CD8-positive, alpha-beta T cell (primary cell): ENCODE measurements at regions of chr14 and their contacts with region 1.

Region 1: DNA sequence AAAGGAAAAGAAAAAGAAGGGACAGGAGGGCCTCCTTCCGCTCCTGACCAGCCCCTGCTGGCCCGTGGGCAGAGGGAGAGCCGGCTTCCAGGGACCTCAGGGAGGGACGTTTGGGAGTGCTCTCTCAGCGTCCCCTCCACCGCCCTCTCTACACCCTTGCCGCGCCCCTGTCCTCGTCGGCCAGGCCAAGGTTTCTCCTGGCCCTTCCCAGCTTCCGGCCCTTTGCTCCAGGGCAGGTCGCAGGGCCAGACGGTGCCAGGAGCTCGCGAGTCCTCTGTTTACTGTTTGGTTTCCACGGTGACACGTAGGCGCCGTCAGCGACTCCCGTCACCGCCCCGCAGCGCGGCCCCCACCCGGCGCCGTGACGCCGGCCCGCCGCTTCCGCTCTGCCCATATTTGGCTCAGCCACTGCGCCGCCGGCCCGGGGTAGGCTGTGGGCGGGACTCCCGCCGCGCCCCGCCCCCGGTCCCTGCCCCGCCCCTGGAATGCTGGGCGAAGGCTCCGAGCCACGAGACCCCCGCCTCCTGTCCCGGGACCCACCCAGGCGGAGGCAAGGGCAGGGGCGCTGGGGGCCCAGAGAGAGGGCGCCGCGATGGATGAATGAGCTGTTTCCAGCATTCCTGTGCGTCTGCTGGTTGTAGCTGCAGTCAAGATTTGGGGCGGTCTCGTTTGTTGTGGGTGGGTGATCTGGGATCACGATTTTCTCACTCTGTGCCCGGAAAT is 15.5 kb downstream of the FOS start:
- DNase-seq: peak; percentile 90 to 99 (median 94)
- ATAC-seq: peak; percentile 87
- H3K4me3 ChIP-seq: peak overlapping the region; percentile 31 to 62
- H3K4me3 Mint-ChIP-seq: peak overlapping the region; percentile 88
- H3K27ac ChIP-seq: peak overlapping the region; percentile 95 to 99
- H3K27ac Mint-ChIP-seq: peak overlapping the region; percentile 93
- H3K4me1 ChIP-seq: peaks cover 23% of the 10 kb centered on the region
- H3K4me1 Mint-ChIP-seq: peaks cover 23% of the 10 kb centered on the region
- H3K27me3 ChIP-seq: peaks cover 0 to 2% of the 10 kb centered on the region in 2 experiments
- H3K27me3 Mint-ChIP-seq: no peaks in the 10 kb centered on the region
- CTCF ChIP-seq: no peak

Region 2: GRCh38 chr14:75053396-75054291 is 240.4 kb before region 1 on chr14:
- CTCF ChIA-PET with region 1: no interaction called
- POLR2A ChIA-PET with region 1: no interaction called
- intact Hi-C with region 1: no loop called
- DNase-seq: no peak
- ATAC-seq: no peak
- H3K4me3 ChIP-seq: no peak overlapping the region
- H3K4me3 Mint-ChIP-seq: no peak overlapping the region
- H3K27ac ChIP-seq: no peak overlapping the region
- H3K27ac Mint-ChIP-seq: no peak overlapping the region
- H3K4me1 ChIP-seq: peaks cover 15% of the 10 kb centered on the region
- H3K4me1 Mint-ChIP-seq: peaks cover 26% of the 10 kb centered on the region
- H3K27me3 ChIP-seq: no peaks in the 10 kb centered on the region
- H3K27me3 Mint-ChIP-seq: no peaks in the 10 kb centered on the region
- CTCF ChIP-seq: no peak

Region 3: DNA sequence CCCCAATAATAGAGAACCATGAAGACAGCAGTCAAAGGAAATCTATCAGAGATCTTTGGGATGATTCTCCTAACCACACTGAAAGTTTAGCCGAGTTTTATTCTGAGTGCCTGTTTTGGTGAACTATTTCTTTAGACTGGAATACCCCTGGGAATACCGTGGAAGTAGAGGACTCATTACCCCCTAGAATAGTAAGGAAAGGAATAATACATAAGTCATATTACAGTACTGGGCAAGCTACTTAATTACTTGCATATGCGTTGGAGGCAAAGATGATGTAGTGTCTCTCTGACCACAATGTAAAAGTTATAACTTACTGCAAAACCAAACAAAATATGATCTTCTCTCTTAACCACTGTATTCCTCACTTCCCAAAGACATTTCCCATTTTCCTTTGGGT is 199.2 kb before region 1 on chr14:
- CTCF ChIA-PET with region 1: no interaction called
- POLR2A ChIA-PET with region 1: no interaction called
- intact Hi-C with region 1: no loop called
- DNase-seq: no peak
- ATAC-seq: no peak
- H3K4me3 ChIP-seq: no peak overlapping the region
- H3K4me3 Mint-ChIP-seq: no peak overlapping the region
- H3K27ac ChIP-seq: no peak overlapping the region
- H3K27ac Mint-ChIP-seq: no peak overlapping the region
- H3K4me1 ChIP-seq: no peaks in the 10 kb centered on the region
- H3K4me1 Mint-ChIP-seq: no peaks in the 10 kb centered on the region
- H3K27me3 ChIP-seq: no peaks in the 10 kb centered on the region
- H3K27me3 Mint-ChIP-seq: no peaks in the 10 kb centered on the region
- CTCF ChIP-seq: no peak

Region 4: DNA sequence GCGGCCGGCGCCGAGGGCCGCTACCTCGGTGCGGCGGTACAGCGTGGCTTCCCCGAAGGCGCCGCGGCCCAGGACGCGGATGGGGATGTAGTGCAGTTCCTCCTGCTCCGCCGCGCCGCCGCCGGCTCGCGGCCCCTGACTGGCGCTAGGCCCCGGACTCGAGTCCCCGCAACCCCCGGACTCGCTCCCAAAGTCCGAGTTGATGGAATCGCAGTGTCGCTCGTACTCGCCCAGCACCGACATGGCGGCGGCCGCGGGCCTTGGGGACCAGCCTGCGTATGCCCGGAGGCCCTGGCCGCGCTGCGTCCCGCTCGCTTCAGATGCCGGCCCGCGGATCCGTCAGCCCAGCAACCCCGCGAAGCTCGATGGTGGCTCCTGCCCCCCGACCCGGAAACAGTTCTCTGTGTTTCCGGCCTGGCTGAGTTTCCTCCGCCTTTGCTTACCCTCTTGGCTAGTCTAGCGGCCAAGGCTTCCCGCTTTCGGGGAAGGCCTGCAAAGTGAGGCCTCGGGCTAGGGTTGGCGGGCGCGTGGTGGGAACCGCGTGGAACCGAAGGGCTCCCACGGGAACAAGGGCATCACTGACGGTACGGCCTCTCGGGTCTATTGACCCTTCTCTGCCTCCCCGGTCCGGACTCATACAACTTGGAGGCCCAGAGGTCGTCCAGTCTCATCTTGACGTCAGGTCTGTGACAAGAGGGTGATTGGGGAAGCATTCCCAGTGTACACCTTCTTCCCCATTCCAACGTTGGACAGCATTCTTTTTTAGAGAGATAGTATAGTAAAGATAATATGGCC is 167.2 kb before region 1 on chr14 and contains the start of gene NEK9:
- CTCF ChIA-PET with region 1: interaction called, 473 read pairs
- POLR2A ChIA-PET with region 1: interaction called, 8 read pairs
- intact Hi-C with region 1: loop called in 1 of 2 experiments (anchors 1 kb)
- DNase-seq: peak; percentile 77 to 93 (median 89)
- ATAC-seq: peak; percentile 82
- H3K4me3 ChIP-seq: peak within 1 kb of the TSS; percentile 87 to 95
- H3K4me3 Mint-ChIP-seq: peak within 1 kb of the TSS; percentile 95
- H3K27ac ChIP-seq: peak within 1 kb of the TSS; percentile 87 to 92
- H3K27ac Mint-ChIP-seq: peak within 1 kb of the TSS; percentile 98
- H3K4me1 ChIP-seq: peaks cover 23% of the 10 kb centered on the region
- H3K4me1 Mint-ChIP-seq: peaks cover 46% of the 10 kb centered on the region
- H3K27me3 ChIP-seq: no peaks in the 10 kb centered on the region
- H3K27me3 Mint-ChIP-seq: no peaks in the 10 kb centered on the region
- CTCF ChIP-seq: no peak
- total RNA-seq, gene NEK9: 40.7 to 42.9 TPM

Region 5: DNA sequence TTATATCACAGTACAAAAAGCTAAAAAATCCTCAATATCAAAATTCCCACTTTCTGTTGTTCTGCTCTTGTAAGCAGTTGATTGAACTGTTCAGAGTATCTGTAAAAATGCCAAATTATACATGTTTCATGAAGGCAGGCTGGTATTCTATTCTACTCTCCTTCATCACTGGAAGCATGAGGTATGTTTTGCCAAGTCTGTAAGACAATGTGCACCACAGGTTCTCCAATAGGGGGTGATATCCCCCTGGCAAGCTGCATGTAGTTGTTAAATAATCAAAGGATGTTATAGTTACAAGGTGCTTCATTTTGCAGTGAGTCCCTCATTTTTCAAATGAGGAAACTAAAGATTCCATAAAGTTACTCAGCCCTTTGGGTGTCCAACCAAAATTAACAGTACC is 152.1 kb before region 1 on chr14:
- CTCF ChIA-PET with region 1: interaction called, 473 read pairs
- POLR2A ChIA-PET with region 1: interaction called, 4 read pairs
- intact Hi-C with region 1: loop called in 1 of 2 experiments (anchors 2 kb)
- DNase-seq: peak in 4 of 9 experiments; percentile 35 to 71 (median 59)
- ATAC-seq: peak; percentile 70
- H3K4me3 ChIP-seq: no peak overlapping the region
- H3K4me3 Mint-ChIP-seq: no peak overlapping the region
- H3K27ac ChIP-seq: no peak overlapping the region
- H3K27ac Mint-ChIP-seq: peak overlapping the region; percentile 55
- H3K4me1 ChIP-seq: peaks cover 50% of the 10 kb centered on the region
- H3K4me1 Mint-ChIP-seq: peaks cover 70% of the 10 kb centered on the region
- H3K27me3 ChIP-seq: no peaks in the 10 kb centered on the region
- H3K27me3 Mint-ChIP-seq: no peaks in the 10 kb centered on the region
- CTCF ChIP-seq: peak; percentile 52

Region 6: GRCh38 chr14:75242546-75243273 is 51.4 kb before region 1 on chr14:
- CTCF ChIA-PET with region 1: interaction called, 20 read pairs
- POLR2A ChIA-PET with region 1: interaction called, 9 read pairs
- intact Hi-C with region 1: no loop called
- DNase-seq: no peak
- ATAC-seq: no peak
- H3K4me3 ChIP-seq: no peak overlapping the region
- H3K4me3 Mint-ChIP-seq: no peak overlapping the region
- H3K27ac ChIP-seq: no peak overlapping the region
- H3K27ac Mint-ChIP-seq: no peak overlapping the region
- H3K4me1 ChIP-seq: peaks cover 18% of the 10 kb centered on the region
- H3K4me1 Mint-ChIP-seq: peaks cover 19% of the 10 kb centered on the region
- H3K27me3 ChIP-seq: no peaks in the 10 kb centered on the region
- H3K27me3 Mint-ChIP-seq: no peaks in the 10 kb centered on the region
- CTCF ChIP-seq: no peak

Region 7: GRCh38 chr14:75258615-75259466 is 35.2 kb before region 1 on chr14:
- CTCF ChIA-PET with region 1: interaction called, 18 read pairs
- POLR2A ChIA-PET with region 1: interaction called, 7 read pairs
- intact Hi-C with region 1: loop called (anchors 1 kb)
- DNase-seq: peak; percentile 97 to 100 (median 100)
- ATAC-seq: peak; percentile 89
- H3K4me3 ChIP-seq: peak overlapping the region; percentile 45 to 54
- H3K4me3 Mint-ChIP-seq: peak overlapping the region; percentile 82
- H3K27ac ChIP-seq: peak overlapping the region; percentile 92 to 98
- H3K27ac Mint-ChIP-seq: peak overlapping the region; percentile 97
- H3K4me1 ChIP-seq: peaks cover 17% of the 10 kb centered on the region
- H3K4me1 Mint-ChIP-seq: peaks cover 29% of the 10 kb centered on the region
- H3K27me3 ChIP-seq: no peaks in the 10 kb centered on the region
- H3K27me3 Mint-ChIP-seq: no peaks in the 10 kb centered on the region
- CTCF ChIP-seq: no peak